ENCODE measurements at regions of chr3 and their contacts with region 1.

Region 1: GRCh38 chr3:15268033-15268631 is 62.1 kb downstream of the CAPN7 start:
- DNase-seq: no peak
- ATAC-seq: peak; percentile 80
- H3K4me3 ChIP-seq: no peak overlapping the region
- H3K27ac ChIP-seq: no peak overlapping the region
- H3K4me1 ChIP-seq: peaks cover 39% of the 10 kb centered on the region
- H3K27me3 ChIP-seq: no peaks in the 10 kb centered on the region
- CTCF ChIP-seq: peak; percentile 95 to 99 (median 97); a peak in 5 of 6 replicates
- EP300 ChIP-seq: no peak
- POLR2A ChIP-seq: no peak
- RAD21 ChIP-seq: peak; percentile 100

Region 2: DNA sequence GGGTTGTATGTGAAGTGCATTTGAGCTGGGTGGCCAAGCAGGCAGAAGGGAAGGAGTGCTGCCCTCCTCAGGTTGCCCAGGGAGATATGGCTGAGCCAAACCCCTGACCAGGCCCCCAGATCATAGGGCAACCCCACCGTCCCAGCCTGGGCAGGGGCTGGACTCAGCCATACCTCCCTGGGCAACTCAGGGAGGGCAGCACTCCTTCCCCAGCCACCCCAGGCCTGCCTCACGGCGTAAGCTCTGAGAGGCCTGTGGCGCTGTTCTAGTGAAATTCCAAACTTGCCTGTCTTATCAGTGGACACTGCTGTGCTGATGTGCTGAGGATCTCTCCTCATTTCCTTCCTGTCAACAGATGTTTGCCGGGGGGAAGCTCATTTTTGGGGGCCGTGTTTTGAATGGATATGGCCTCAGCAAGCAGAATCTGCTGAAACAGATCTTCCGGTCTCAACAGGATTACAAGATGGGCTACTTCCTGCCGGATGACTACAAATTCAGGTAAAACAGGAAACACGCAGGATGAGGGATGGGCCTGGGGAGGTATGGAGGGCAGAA is 506.9 kb before region 1 on chr3:
- CTCF ChIA-PET with region 1: no interaction called
- POLR2A ChIA-PET with region 1: no interaction called
- RAD21 ChIA-PET with region 1: no interaction called
- SMC1A ChIA-PET with region 1: no interaction called
- in situ Hi-C with region 1: no loop called
- intact Hi-C with region 1: no loop called
- DNase-seq: no peak
- ATAC-seq: peak; percentile 50; the same call in 2 of the 3 replicates
- H3K4me3 ChIP-seq: no peak overlapping the region
- H3K27ac ChIP-seq: no peak overlapping the region
- H3K4me1 ChIP-seq: no peaks in the 10 kb centered on the region
- H3K27me3 ChIP-seq: no peaks in the 10 kb centered on the region
- CTCF ChIP-seq: no peak
- EP300 ChIP-seq: no peak
- POLR2A ChIP-seq: no peak
- RAD21 ChIP-seq: no peak

Region 3: GRCh38 chr3:14863333-14864100 is 404.6 kb before region 1 on chr3:
- CTCF ChIA-PET with region 1: no interaction called
- POLR2A ChIA-PET with region 1: no interaction called
- RAD21 ChIA-PET with region 1: no interaction called
- SMC1A ChIA-PET with region 1: no interaction called
- in situ Hi-C with region 1: no loop called
- intact Hi-C with region 1: no loop called
- DNase-seq: no peak
- ATAC-seq: peak; percentile 54; the same call in 2 of the 3 replicates
- H3K4me3 ChIP-seq: no peak overlapping the region
- H3K27ac ChIP-seq: no peak overlapping the region
- H3K4me1 ChIP-seq: peaks cover 6% of the 10 kb centered on the region
- H3K27me3 ChIP-seq: no peaks in the 10 kb centered on the region; a peak in 1 of 4 replicates
- CTCF ChIP-seq: peak; percentile 19 to 27 (median 19); a peak in 4 of 6 replicates
- EP300 ChIP-seq: no peak
- POLR2A ChIP-seq: no peak
- RAD21 ChIP-seq: peak; percentile 27; the same call in 1 of the 2 replicates

Region 4: DNA sequence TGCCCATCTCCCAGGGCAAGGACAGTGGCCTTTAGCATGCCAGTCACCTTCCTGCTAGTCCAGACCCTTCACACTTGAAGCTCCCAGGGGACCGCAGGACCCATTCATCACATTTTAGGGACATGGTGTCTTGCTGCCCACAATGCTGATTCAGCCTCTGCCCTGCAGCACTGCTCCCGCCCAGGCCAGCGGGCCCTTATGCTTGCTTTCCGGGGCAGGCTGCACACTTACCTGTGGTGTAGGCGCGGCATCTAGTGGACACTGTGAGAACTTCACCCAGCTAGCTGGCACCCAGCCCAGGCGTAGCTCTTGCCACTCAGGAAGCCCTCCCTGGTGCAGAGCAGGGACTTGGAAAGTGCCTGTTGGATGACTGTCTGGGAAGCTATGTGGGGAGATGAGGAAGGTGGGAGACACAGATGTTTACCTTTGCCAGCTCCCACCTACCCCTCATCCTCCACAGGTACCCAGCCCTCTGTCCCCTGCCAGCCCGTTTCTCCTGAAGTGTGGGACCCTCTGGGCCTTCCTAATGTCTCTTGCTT is 347.0 kb before region 1 on chr3:
- CTCF ChIA-PET with region 1: no interaction called
- POLR2A ChIA-PET with region 1: no interaction called
- RAD21 ChIA-PET with region 1: no interaction called
- SMC1A ChIA-PET with region 1: no interaction called
- in situ Hi-C with region 1: no loop called
- intact Hi-C with region 1: no loop called
- DNase-seq: no peak
- ATAC-seq: peak; percentile 97
- H3K4me3 ChIP-seq: no peak overlapping the region
- H3K27ac ChIP-seq: no peak overlapping the region
- H3K4me1 ChIP-seq: no peaks in the 10 kb centered on the region
- H3K27me3 ChIP-seq: no peaks in the 10 kb centered on the region
- CTCF ChIP-seq: peak; percentile 97 to 99 (median 98); a peak in 5 of 6 replicates
- EP300 ChIP-seq: no peak
- POLR2A ChIP-seq: no peak
- RAD21 ChIP-seq: peak; percentile 98

Region 5: GRCh38 chr3:15120986-15121385 is 147.1 kb before region 1 on chr3:
- CTCF ChIA-PET with region 1: interaction called, 23 read pairs
- POLR2A ChIA-PET with region 1: no interaction called
- RAD21 ChIA-PET with region 1: interaction called, 4 read pairs
- SMC1A ChIA-PET with region 1: interaction called, 4 read pairs
- in situ Hi-C with region 1: no loop called
- intact Hi-C with region 1: no loop called
- DNase-seq: peak; percentile 24
- ATAC-seq: peak; percentile 87
- H3K4me3 ChIP-seq: no peak overlapping the region
- H3K27ac ChIP-seq: no peak overlapping the region
- H3K4me1 ChIP-seq: peaks cover 14% of the 10 kb centered on the region
- H3K27me3 ChIP-seq: no peaks in the 10 kb centered on the region
- CTCF ChIP-seq: no peak
- EP300 ChIP-seq: no peak
- POLR2A ChIP-seq: no peak
- RAD21 ChIP-seq: no peak

Region 6: DNA sequence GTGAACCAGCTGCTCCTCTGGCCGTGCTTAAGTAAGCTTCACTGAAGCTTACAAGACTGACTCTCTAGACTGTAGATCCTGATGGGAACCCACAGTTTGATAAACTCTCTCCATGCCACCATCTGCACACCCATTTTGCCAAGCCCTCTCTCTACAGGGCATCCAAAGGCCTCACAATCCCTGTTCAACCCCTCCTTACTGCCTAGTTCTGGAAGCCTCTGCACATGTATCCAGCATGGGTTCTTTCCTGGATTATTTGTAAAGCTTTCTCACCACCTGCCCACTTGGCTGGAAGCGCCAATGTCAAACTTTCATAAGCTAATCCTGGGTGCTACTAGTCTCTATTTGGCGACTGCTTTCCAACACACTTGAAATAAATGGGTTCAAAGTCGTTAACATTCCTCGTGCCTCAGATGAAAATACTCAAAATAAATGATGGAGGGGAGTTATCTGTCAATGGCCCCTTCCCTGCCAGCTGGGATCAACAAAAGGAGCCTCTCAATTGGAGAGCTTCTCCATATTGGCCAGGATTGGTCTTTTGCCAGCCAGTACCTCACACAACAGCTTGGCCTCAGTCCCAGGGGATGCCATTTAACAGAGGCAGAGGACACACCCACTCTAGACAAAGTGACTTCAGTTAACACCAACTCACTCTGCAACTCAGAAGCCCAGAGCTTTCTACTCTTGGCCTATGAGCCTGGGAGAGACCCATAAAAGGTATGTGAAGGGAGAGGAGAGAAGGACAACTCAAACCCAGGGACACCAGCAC is 16.2 kb after region 1 on chr3:
- CTCF ChIA-PET with region 1: interaction called, 9 read pairs
- POLR2A ChIA-PET with region 1: no interaction called
- RAD21 ChIA-PET with region 1: interaction called, 8 read pairs
- SMC1A ChIA-PET with region 1: interaction called, 27 read pairs
- in situ Hi-C with region 1: no loop called
- intact Hi-C with region 1: no loop called
- DNase-seq: no peak
- ATAC-seq: peak; percentile 69
- H3K4me3 ChIP-seq: no peak overlapping the region
- H3K27ac ChIP-seq: no peak overlapping the region
- H3K4me1 ChIP-seq: peaks cover 25% of the 10 kb centered on the region
- H3K27me3 ChIP-seq: no peaks in the 10 kb centered on the region
- CTCF ChIP-seq: no peak
- EP300 ChIP-seq: no peak
- POLR2A ChIP-seq: no peak
- RAD21 ChIP-seq: no peak

Region 7: GRCh38 chr3:15332405-15333098 is 64.4 kb after region 1 on chr3 and contains the start of gene SH3BP5:
- CTCF ChIA-PET with region 1: interaction called, 125 read pairs
- POLR2A ChIA-PET with region 1: interaction called, 4 read pairs
- RAD21 ChIA-PET with region 1: interaction called, 40 read pairs
- SMC1A ChIA-PET with region 1: interaction called, 77 read pairs
- in situ Hi-C with region 1: no loop called
- intact Hi-C with region 1: loop called (anchors 1 kb)
- DNase-seq: no peak
- ATAC-seq: peak; percentile 85
- H3K4me3 ChIP-seq: peak within 1 kb of the TSS; percentile 86
- H3K27ac ChIP-seq: peak within 1 kb of the TSS; percentile 41
- H3K4me1 ChIP-seq: peaks cover 36% of the 10 kb centered on the region
- H3K27me3 ChIP-seq: no peaks in the 10 kb centered on the region
- CTCF ChIP-seq: peak; percentile 53 to 67 (median 59); a peak in 5 of 6 replicates
- EP300 ChIP-seq: no peak; a peak in 1 of 4 replicates
- POLR2A ChIP-seq: peak; percentile 84
- RAD21 ChIP-seq: peak; percentile 31; the same call in 1 of the 2 replicates
- polyA plus RNA-seq, gene SH3BP5: 14.9 to 33.8 TPM

Region 8: GRCh38 chr3:15377961-15378791 is 110.0 kb after region 1 on chr3:
- CTCF ChIA-PET with region 1: interaction called, 228 read pairs
- POLR2A ChIA-PET with region 1: interaction called, 12 read pairs
- RAD21 ChIA-PET with region 1: interaction called, 137 read pairs
- SMC1A ChIA-PET with region 1: interaction called, 136 read pairs
- in situ Hi-C with region 1: loop called (anchors 5 kb)
- intact Hi-C with region 1: loop called (anchors 1 kb)
- DNase-seq: peak; percentile 81
- ATAC-seq: peak; percentile 95
- H3K4me3 ChIP-seq: no peak overlapping the region
- H3K27ac ChIP-seq: peak overlapping the region; percentile 27; the same call in 1 of the 2 replicates
- H3K4me1 ChIP-seq: peaks cover 16% of the 10 kb centered on the region
- H3K27me3 ChIP-seq: no peaks in the 10 kb centered on the region
- CTCF ChIP-seq: peak; percentile 82 to 92 (median 86)
- EP300 ChIP-seq: peak; percentile 44 to 85; a peak in 2 of 4 replicates
- POLR2A ChIP-seq: no peak
- RAD21 ChIP-seq: peak; percentile 80

Region 9: DNA sequence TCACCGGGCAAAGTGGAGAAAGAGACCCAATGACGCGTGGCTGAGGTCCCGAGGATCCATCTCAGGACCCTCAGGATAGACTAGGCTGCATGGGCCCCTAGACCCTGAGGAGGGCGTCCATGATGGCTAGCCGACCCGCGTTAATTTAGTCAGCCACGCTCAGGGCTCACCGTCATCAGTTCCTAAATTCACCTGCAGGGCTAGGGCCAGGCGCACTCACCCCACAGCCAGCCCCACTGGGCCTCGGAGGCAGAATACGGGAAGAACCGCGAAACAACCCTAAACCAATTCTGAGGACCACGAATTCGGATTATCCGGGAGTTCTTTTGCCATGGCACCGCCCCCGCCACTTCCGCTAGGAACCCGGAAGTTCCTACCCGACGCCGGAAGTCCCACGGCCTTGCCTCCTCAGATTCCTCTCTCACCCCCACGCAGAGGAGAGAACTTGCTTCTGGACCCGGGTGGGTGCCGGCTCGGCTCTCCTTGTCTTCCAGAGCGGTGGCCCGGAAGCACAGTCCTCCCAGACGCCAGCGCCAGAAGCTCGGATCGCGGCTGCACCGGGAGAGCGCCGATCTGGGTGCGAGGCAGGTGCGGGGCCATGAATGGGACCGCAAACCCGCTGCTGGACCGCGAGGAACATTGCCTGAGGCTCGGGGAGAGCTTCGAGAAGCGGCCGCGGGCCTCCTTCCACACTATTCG is 159.2 kb after region 1 on chr3 and contains the starts of genes EAF1 and METTL6:
- CTCF ChIA-PET with region 1: interaction called, 6 read pairs
- POLR2A ChIA-PET with region 1: no interaction called
- RAD21 ChIA-PET with region 1: interaction called, 7 read pairs
- SMC1A ChIA-PET with region 1: interaction called, 11 read pairs
- in situ Hi-C with region 1: no loop called
- intact Hi-C with region 1: no loop called
- DNase-seq: peak; percentile 38
- ATAC-seq: peak; percentile 88
- H3K4me3 ChIP-seq: peak within 1 kb of the TSS; percentile 95
- H3K27ac ChIP-seq: peak within 1 kb of the TSS; percentile 81
- H3K4me1 ChIP-seq: no peaks in the 10 kb centered on the region; the same call in 1 of the 2 replicates
- H3K27me3 ChIP-seq: no peaks in the 10 kb centered on the region
- CTCF ChIP-seq: peak in 1 of 3 experiments; percentile 15; a peak in 1 of 6 replicates
- EP300 ChIP-seq: 0 out of 4 replicates have a peak, but pooled peaks of 1 of the 2 experiments have one; percentile 10
- POLR2A ChIP-seq: peak; percentile 85
- RAD21 ChIP-seq: no peak
- polyA plus RNA-seq, gene EAF1: 6.8 to 9.2 TPM
- polyA plus RNA-seq, gene METTL6: 27.4 to 29.6 TPM

Measured in GM12878 (cell line).